ENCODE measurements at regions of chr10 and their contacts with region 1.

Region 1: GRCh38 chr10:100743626-100744135 is 1.7 kb upstream of the PAX2 start:
- DNase-seq: no peak
- ATAC-seq: peak; percentile 58
- H3K4me3 Mint-ChIP-seq: peak overlapping the region; percentile 53
- H3K27ac Mint-ChIP-seq: no peak overlapping the region
- H3K4me1 Mint-ChIP-seq: peaks cover 52% of the 10 kb centered on the region
- H3K27me3 Mint-ChIP-seq: peaks cover 64% of the 10 kb centered on the region
- CTCF ChIP-seq: no peak

Region 2: DNA sequence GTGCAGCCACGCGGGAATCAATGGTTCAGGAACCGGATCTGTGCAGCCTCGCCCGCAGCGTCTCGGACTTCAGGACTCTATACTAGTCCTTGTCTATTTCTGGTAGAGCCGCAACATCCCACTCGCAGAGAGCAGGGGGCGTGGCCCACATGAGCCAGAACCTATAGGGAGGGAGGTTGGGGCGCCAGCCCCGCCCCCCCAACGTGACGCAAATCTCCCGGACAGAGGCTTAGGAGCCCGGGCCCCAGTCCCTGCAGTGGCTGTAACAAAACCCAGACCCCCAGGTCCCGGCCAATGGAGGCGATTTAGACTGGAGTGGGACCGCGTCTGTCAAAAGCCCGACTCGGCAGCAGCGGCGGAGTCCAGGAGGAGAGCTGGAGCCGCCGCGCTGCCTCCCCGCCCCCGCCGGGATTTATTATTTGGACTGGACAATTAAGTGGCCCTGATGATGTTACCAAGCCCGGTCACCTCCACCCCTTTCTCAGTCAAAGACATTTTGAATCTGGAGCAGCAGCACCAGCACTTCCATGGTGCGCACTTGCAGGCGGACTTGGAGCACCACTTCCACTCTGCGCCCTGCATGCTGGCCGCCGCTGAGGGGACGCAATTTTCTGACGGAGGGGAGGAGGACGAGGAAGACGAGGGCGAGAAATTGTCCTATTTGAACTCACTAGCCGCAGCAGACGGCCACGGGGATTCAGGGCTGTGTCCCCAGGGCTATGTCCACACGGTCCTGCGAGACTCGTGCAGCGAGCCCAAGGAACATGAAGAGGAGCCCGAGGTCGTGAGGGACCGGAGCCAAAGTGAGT is 1210.8 kb before region 1 on chr10 and contains the start of gene NKX2-3:
- CTCF ChIA-PET with region 1: no interaction called
- POLR2A ChIA-PET with region 1: no interaction called
- intact Hi-C with region 1: loop called (anchors 2 kb)
- DNase-seq: no peak
- ATAC-seq: no peak
- H3K4me3 Mint-ChIP-seq: peak within 1 kb of the TSS; percentile 78
- H3K27ac Mint-ChIP-seq: no peak within 1 kb of the TSS
- H3K4me1 Mint-ChIP-seq: peaks cover 71% of the 10 kb centered on the region
- H3K27me3 Mint-ChIP-seq: peaks cover 80% of the 10 kb centered on the region
- CTCF ChIP-seq: no peak
- total RNA-seq, gene NKX2-3: not detected in 2 replicates

Region 3: GRCh38 chr10:100562008-100562711 is 181.5 kb before region 1 on chr10:
- CTCF ChIA-PET with region 1: interaction called, 6 read pairs
- POLR2A ChIA-PET with region 1: no interaction called
- intact Hi-C with region 1: loop called (anchors 1 kb)
- DNase-seq: peak; percentile 62
- ATAC-seq: peak; percentile 98
- H3K4me3 Mint-ChIP-seq: peak overlapping the region; percentile 20
- H3K27ac Mint-ChIP-seq: no peak overlapping the region
- H3K4me1 Mint-ChIP-seq: peaks cover 15% of the 10 kb centered on the region
- H3K27me3 Mint-ChIP-seq: peaks cover 46% of the 10 kb centered on the region
- CTCF ChIP-seq: no peak

Region 4: GRCh38 chr10:100670828-100671479 is 72.7 kb before region 1 on chr10:
- CTCF ChIA-PET with region 1: interaction called, 4 read pairs
- POLR2A ChIA-PET with region 1: no interaction called
- intact Hi-C with region 1: loop called (anchors 1 kb)
- DNase-seq: peak; percentile 67
- ATAC-seq: peak; percentile 82
- H3K4me3 Mint-ChIP-seq: peak overlapping the region; percentile 32
- H3K27ac Mint-ChIP-seq: no peak overlapping the region
- H3K4me1 Mint-ChIP-seq: peaks cover 8% of the 10 kb centered on the region
- H3K27me3 Mint-ChIP-seq: peaks cover 58% of the 10 kb centered on the region
- CTCF ChIP-seq: no peak

Region 5: GRCh38 chr10:100710151-100710871 is 33.4 kb before region 1 on chr10:
- CTCF ChIA-PET with region 1: no interaction called
- POLR2A ChIA-PET with region 1: no interaction called
- intact Hi-C with region 1: no loop called
- DNase-seq: no peak
- ATAC-seq: no peak
- H3K4me3 Mint-ChIP-seq: no peak overlapping the region
- H3K27ac Mint-ChIP-seq: no peak overlapping the region
- H3K4me1 Mint-ChIP-seq: peaks cover 14% of the 10 kb centered on the region
- H3K27me3 Mint-ChIP-seq: peaks cover 69% of the 10 kb centered on the region
- CTCF ChIP-seq: no peak

Region 6: GRCh38 chr10:100827819-100828737 is 84.4 kb after region 1 on chr10:
- CTCF ChIA-PET with region 1: interaction called, 3 read pairs
- POLR2A ChIA-PET with region 1: no interaction called
- intact Hi-C with region 1: loop called (anchors 1 kb)
- DNase-seq: peak; percentile 44
- ATAC-seq: peak; percentile 48
- H3K4me3 Mint-ChIP-seq: peak overlapping the region; percentile 83
- H3K27ac Mint-ChIP-seq: peak overlapping the region; percentile 53
- H3K4me1 Mint-ChIP-seq: peaks cover 41% of the 10 kb centered on the region
- H3K27me3 Mint-ChIP-seq: peaks cover 60% of the 10 kb centered on the region
- CTCF ChIP-seq: no peak

Region 7: GRCh38 chr10:101130984-101131961 is 387.6 kb after region 1 on chr10 and contains the start of gene TLX1:
- CTCF ChIA-PET with region 1: no interaction called
- POLR2A ChIA-PET with region 1: no interaction called
- intact Hi-C with region 1: loop called (anchors 5 kb)
- DNase-seq: peak; percentile 23
- ATAC-seq: no peak
- H3K4me3 Mint-ChIP-seq: peak within 1 kb of the TSS; percentile 41
- H3K27ac Mint-ChIP-seq: no peak within 1 kb of the TSS
- H3K4me1 Mint-ChIP-seq: peaks cover 40% of the 10 kb centered on the region
- H3K27me3 Mint-ChIP-seq: peaks cover 73% of the 10 kb centered on the region
- CTCF ChIP-seq: no peak
- total RNA-seq, gene TLX1: not detected in 2 replicates

Region 8: DNA sequence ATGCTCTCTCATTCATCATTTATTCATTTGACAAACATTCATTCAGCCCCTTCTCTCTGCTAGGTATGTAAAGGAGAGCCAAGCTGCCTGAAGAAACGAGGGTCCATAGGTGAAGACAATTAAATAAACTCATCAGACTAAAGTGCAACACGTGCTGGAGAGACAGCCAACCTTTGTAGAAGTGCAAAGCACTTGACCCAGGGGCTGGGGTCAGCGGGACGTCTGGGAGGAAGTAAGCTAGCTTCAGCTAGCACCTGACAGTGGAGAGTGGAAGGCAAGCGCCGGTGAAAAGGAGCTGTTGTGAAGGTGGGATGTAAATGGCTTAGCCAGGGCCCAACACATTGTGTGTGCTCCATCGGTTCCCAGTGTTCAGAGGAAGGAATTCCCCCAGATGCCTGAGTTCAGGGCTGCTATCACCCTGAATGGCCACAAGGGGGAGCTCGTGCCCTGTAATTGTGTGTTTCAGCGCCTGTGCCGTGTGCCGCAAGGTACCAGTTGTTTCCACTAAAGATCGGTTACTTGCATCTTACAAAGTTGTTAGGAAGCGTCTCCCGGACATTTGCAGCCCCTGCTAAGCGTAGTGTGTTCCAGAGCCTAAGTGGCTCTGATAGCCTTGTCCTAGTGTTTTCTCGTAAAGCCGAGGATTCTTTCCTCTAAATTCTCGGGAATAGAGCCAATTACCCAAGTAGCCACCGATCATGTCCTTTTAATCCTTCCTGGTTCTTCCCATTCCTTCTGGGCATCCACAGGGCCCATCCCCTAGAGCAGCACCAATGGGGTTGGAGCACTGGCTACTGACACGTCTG is 418.0 kb after region 1 on chr10:
- CTCF ChIA-PET with region 1: no interaction called
- POLR2A ChIA-PET with region 1: no interaction called
- intact Hi-C with region 1: no loop called
- DNase-seq: peak; percentile 47
- ATAC-seq: peak; percentile 94
- H3K4me3 Mint-ChIP-seq: no peak overlapping the region
- H3K27ac Mint-ChIP-seq: no peak overlapping the region
- H3K4me1 Mint-ChIP-seq: peaks cover 15% of the 10 kb centered on the region
- H3K27me3 Mint-ChIP-seq: peaks cover 59% of the 10 kb centered on the region
- CTCF ChIP-seq: peak; percentile 32

Region 9: DNA sequence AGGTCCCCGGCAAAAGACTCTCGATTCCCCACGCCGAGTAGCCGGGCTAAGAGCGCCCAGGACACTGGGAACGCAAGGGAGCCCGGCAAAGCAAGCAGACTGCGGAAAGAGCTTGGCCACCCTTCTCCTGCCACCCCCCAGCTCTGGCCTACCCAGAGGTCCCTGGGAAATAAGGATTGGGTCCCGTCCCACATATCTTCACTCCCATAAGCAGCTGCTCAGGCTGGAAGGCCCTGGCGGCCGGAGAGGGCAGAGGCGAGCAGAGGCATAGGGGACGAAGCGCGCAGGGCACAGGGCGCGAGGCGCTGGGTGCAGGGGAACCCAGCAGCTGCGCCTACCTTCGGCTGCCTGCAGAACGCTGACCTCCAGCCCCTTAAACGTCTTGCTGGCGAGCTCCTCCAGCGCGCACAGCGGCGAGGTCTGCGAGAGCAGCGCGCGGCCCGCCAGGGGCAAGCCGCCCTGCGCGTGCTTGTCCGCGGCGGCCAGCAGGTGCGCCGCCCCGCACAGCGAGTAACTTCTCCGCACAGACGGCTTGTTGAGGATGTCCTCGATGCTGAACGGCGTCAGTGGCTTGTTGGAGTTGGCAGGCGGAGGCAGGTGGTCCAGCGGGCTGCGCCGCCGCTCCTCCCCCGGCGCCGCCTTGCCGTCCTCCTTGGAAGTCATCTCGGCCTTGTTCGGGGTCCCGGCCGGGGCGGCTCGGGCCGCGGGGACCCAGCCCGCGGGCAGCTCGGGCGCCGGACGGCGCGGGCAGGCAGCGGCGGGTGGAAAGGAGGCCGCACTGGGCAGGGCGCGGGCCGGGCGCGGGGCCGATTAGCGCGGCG is 484.7 kb after region 1 on chr10:
- CTCF ChIA-PET with region 1: no interaction called
- POLR2A ChIA-PET with region 1: interaction called, 12 read pairs
- intact Hi-C with region 1: loop called (anchors 5 kb)
- DNase-seq: no peak
- ATAC-seq: no peak
- H3K4me3 Mint-ChIP-seq: peak overlapping the region; percentile 48
- H3K27ac Mint-ChIP-seq: no peak overlapping the region
- H3K4me1 Mint-ChIP-seq: peaks cover 41% of the 10 kb centered on the region
- H3K27me3 Mint-ChIP-seq: peaks cover 63% of the 10 kb centered on the region
- CTCF ChIP-seq: no peak